PC-3 (cell line): ENCODE measurements at regions of chr2 and their contacts with region 1.

Region 1: DNA sequence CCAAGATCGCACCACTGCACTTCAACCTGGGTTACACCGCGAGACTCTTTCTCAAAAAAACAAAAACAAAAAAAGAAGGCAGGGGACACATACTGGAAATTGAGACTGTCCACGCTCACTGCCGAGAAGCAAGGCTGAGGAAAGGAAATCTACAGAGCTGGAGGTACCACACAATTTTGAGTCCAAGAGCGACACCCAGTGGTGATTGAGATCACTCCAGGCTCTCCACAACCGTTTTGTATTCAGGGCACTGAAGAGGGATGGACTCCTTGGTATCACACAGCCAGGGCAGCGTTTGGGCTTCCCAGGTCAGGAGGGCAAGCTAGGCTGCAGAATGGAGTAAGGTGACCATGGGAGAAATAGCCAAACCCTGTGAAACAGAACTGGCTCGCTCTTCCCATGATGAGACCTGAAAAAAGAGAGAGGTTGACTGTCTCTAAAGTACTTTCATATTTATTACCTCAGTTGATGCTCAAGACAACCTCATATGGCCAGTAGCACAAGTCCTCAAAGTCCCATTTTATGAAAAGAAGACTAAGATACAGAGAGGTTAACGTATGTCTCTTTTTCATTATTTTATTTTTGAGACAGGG is 74.5 kb upstream of the YPEL5 start:
- DNase-seq: peak; percentile 91
- ATAC-seq: peak; percentile 98
- H3K4me3 ChIP-seq: no peak overlapping the region
- H3K27ac ChIP-seq: no peak overlapping the region
- H3K4me1 ChIP-seq: peaks cover 11% of the 10 kb centered on the region; the same call in 1 of the 2 replicates
- H3K27me3 ChIP-seq: 0 out of 2 replicates have a peak, but pooled peaks cover 7% of the 10 kb centered on the region
- CTCF ChIP-seq: peak; percentile 84

Region 2: DNA sequence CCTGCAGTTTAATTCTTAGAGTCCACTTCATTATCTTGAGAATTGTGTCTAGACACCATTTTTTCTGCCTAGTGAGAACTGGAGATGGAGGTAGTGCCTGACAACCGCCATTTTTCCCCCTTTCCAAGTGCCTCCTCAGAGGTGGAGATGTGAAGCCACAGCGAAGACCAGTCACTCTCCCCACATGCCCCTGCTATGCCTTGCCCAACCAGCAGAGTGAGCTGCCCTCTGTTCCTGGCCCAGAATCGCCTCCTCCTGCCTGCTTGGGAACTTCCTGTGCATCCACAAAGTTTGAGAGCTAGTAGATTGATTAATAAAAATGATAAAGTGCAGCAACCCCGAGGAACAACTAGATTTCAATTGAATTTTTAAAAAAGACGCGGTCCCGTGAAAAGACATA is 833.8 kb before region 1 on chr2:
- CTCF ChIA-PET with region 1: no interaction called
- POLR2A ChIA-PET with region 1: no interaction called
- intact Hi-C with region 1: loop called (anchors 1 kb)
- DNase-seq: peak; percentile 71
- ATAC-seq: peak; percentile 77
- H3K4me3 ChIP-seq: no peak overlapping the region
- H3K27ac ChIP-seq: no peak overlapping the region
- H3K4me1 ChIP-seq: peaks cover 7% of the 10 kb centered on the region
- H3K27me3 ChIP-seq: no peaks in the 10 kb centered on the region
- CTCF ChIP-seq: peak; percentile 88

Region 3: DNA sequence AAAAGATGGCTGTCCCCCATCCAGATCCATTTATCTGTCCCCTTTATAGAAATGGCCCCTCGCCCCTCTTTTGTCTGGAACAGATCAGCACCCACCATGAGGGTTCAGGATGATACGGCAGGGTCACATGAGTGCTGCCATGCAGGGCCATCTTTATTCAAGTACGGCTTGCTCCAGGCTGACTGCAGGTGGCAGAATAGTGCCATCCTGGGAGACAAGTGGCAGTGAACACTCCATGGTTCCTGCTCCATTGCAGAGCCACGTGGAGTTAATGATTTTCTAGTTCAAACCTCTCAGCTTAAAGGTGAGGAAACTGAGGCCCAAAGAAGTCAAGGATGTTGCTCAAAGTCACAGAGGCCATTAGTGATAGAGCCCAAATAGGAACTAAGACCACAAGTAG is 776.5 kb before region 1 on chr2:
- CTCF ChIA-PET with region 1: no interaction called
- POLR2A ChIA-PET with region 1: no interaction called
- intact Hi-C with region 1: loop called (anchors 2 kb)
- DNase-seq: peak; percentile 61
- ATAC-seq: peak; percentile 82
- H3K4me3 ChIP-seq: no peak overlapping the region
- H3K27ac ChIP-seq: no peak overlapping the region
- H3K4me1 ChIP-seq: no peaks in the 10 kb centered on the region
- H3K27me3 ChIP-seq: 0 out of 2 replicates have a peak, but pooled peaks cover 10% of the 10 kb centered on the region
- CTCF ChIP-seq: peak; percentile 78

Region 4: DNA sequence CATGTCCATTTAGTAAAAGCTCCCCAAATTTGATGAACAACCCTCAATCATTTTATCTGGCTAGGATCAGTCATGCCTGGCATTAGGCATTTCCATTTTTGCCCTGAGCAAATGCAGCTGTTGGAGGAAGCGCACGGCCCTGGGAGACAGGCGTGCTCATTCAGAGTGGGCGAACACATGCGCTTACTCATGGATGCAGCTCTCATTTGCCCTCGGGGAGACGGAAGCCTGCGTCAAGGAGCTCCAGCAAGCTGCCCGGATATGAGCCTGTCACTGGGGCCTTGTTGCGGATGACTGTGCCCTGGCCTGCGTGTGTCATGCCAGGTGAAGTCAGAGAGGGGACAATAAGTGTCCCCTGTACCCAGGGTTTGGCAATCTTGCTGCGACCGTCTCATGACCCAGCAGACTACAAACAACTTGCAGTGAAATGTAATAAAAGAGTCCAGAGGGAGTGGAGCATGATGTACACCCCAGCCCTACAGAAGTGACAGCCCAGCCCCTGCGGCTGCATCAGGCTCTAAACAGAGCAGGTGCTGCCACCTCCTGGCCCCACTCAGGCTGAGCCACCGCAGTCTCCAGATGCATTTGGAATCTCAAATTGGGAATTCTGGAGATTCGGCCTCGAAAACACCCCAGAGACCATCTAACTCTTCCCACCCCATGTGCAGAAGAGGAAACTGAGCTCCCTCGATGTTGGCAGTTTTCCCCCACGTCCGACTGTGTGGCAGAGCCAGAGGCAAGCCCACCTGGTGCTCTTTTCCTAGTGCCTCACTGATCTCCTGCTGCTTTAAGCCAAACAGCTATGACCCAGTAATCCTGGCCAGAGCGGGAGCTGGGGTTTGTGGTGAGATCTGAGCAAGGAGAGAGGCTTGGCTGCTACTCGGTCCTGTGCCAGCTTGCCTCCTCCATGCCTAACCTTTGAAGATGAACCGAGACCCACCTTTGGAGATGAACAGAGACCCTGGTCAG is 46.0 kb before region 1 on chr2:
- CTCF ChIA-PET with region 1: no interaction called
- POLR2A ChIA-PET with region 1: no interaction called
- intact Hi-C with region 1: loop called (anchors 2 kb)
- DNase-seq: peak; percentile 96
- ATAC-seq: peak; percentile 93
- H3K4me3 ChIP-seq: peak overlapping the region; percentile 19; the same call in 1 of the 2 replicates
- H3K27ac ChIP-seq: peak overlapping the region; percentile 77
- H3K4me1 ChIP-seq: peaks cover 33% of the 10 kb centered on the region
- H3K27me3 ChIP-seq: no peaks in the 10 kb centered on the region
- CTCF ChIP-seq: peak; percentile 94

Region 5: DNA sequence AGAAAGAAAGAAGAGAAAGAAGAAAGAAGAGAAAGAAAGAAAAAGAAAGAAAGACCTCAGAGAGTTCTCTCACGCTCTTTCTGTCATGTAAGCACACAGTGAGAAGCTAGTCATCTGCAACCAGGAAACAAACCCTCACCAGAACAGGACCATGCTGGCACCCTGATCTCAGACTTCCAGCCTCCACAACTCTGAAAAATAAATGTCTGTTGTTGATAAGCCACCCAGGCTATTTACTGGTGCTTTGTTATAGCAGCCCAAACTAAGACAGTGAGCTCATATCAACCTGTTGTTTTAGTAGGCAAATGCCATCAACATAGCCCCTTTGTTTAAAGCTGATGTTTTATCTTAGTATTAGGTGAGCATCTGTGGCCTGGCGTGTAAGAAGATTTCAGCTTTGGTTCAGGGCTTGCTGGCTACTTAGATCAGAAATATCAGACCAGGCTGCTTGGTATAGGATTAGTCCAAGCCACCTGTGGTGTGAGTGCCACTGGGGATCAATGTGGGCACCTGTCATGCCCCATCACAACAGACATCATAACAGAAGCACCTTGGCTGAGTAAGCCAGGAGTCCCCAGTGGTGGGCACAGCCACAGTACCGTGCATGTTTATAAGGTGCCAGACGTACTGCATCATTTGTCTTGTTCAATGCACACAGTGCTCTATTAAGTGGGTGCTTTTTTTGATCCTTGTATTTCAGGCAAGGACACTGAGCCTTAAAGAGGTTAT is 253.4 kb after region 1 on chr2:
- CTCF ChIA-PET with region 1: no interaction called
- POLR2A ChIA-PET with region 1: no interaction called
- intact Hi-C with region 1: no loop called
- DNase-seq: no peak
- ATAC-seq: no peak
- H3K4me3 ChIP-seq: no peak overlapping the region
- H3K27ac ChIP-seq: no peak overlapping the region
- H3K4me1 ChIP-seq: no peaks in the 10 kb centered on the region
- H3K27me3 ChIP-seq: 0 out of 2 replicates have a peak, but pooled peaks cover 7% of the 10 kb centered on the region
- CTCF ChIP-seq: no peak